T-cell (primary cell): ENCODE measurements at regions of chr2 and their contacts with region 1.

Region 1: DNA sequence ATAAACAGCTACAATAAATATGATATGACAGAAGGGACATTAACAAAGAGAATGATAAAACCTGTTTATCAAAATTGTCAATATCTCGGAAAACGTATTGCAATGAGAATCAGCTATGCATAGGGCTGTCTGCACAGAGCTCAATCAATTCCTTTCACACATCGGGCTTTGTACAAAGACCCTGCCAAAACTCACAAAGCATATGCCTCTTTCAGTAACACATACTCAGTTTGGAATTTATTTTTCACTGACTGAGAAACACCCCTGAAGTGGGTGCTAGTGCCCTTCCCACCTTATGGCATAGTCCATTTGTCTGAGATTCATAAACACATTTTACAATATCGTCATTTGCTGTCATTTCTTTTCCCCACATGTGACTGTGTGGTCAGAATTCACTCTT is 815.8 kb upstream of the FAM98A start:
- DNase-seq: no peak
- ATAC-seq: no peak
- H3K4me3 ChIP-seq: no peak overlapping the region
- H3K4me3 Mint-ChIP-seq: no peak overlapping the region
- H3K27ac ChIP-seq: no peak overlapping the region
- H3K27ac Mint-ChIP-seq: no peak overlapping the region
- H3K4me1 ChIP-seq: no peaks in the 10 kb centered on the region
- H3K4me1 Mint-ChIP-seq: no peaks in the 10 kb centered on the region
- H3K27me3 ChIP-seq: no peaks in the 10 kb centered on the region
- H3K27me3 Mint-ChIP-seq: no peaks in the 10 kb centered on the region

Region 2: GRCh38 chr2:34388446-34388845 is 26.4 kb before region 1 on chr2:
- CTCF ChIA-PET with region 1: interaction called in 1 of 2 experiments, 16 read pairs
- POLR2A ChIA-PET with region 1: no interaction called
- DNase-seq: no peak
- ATAC-seq: no peak
- H3K4me3 ChIP-seq: no peak overlapping the region
- H3K4me3 Mint-ChIP-seq: no peak overlapping the region
- H3K27ac ChIP-seq: no peak overlapping the region
- H3K27ac Mint-ChIP-seq: no peak overlapping the region
- H3K4me1 ChIP-seq: no peaks in the 10 kb centered on the region
- H3K4me1 Mint-ChIP-seq: no peaks in the 10 kb centered on the region
- H3K27me3 ChIP-seq: no peaks in the 10 kb centered on the region
- H3K27me3 Mint-ChIP-seq: no peaks in the 10 kb centered on the region

Region 3: GRCh38 chr2:34435011-34435410 is 20.2 kb after region 1 on chr2:
- CTCF ChIA-PET with region 1: no interaction called
- POLR2A ChIA-PET with region 1: no interaction called
- DNase-seq: no peak
- ATAC-seq: no peak
- H3K4me3 ChIP-seq: no peak overlapping the region
- H3K4me3 Mint-ChIP-seq: no peak overlapping the region
- H3K27ac ChIP-seq: no peak overlapping the region
- H3K27ac Mint-ChIP-seq: no peak overlapping the region
- H3K4me1 ChIP-seq: no peaks in the 10 kb centered on the region
- H3K4me1 Mint-ChIP-seq: no peaks in the 10 kb centered on the region
- H3K27me3 ChIP-seq: no peaks in the 10 kb centered on the region
- H3K27me3 Mint-ChIP-seq: no peaks in the 10 kb centered on the region